B cell (primary cell): ENCODE measurements at regions of chr6 and their contacts with region 1.

Region 1: DNA sequence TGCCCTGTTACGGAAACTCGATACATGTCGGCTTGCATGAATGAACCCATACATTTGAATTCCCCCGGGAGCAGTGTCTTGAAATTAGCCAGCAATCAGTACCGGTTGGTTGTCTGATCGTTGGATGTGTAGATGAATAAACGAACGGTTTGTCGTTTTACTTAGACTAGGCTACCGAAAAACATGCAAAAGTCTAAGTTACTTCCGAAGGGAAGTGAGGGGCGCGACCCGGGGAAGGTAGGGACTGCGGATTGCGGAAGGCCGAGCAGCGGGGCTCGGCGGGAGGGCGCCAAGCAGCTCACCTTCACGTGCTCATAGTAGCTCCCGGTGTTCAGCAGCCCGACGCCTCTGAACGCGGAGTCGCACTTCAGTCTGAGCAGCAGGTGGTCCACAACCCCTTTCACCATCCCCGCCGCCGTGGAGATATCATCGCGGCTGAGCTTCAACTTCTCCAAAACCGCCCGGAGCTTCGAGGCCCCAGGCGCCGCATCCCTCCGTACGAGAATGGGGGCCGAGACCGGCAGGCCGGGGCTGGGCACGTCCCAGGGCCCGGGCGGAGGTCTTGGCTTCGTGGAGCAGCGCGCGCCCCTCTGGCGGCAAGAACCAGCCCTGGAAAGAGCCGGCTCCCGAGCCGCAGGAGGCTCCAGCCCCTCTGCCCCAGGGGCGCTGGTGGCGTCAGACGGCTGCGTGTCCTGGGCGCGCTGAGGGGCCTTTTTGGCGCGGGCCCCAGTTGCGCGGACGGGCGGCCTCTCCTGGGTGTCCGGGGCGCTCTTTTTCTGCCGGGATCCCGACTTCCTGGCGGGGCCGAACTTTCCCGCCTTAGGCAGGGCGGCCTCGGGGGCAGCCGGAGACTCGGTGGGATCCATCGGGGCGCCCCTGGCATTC is 632 bp downstream of the CGAS start:
- DNase-seq: peak; percentile 82
- ATAC-seq: peak; percentile 56
- H3K4me3 ChIP-seq: peak overlapping the region; percentile 86 to 94 (median 91)
- H3K4me3 Mint-ChIP-seq: peak overlapping the region; percentile 95
- H3K27ac ChIP-seq: peak overlapping the region; percentile 87 to 89
- H3K27ac Mint-ChIP-seq: peak overlapping the region; percentile 91
- H3K4me1 ChIP-seq: peaks cover 16 to 25% of the 10 kb centered on the region in 2 donors
- H3K4me1 Mint-ChIP-seq: peaks cover 23% of the 10 kb centered on the region
- H3K27me3 ChIP-seq: no peaks in the 10 kb centered on the region
- H3K27me3 Mint-ChIP-seq: no peaks in the 10 kb centered on the region
- CTCF ChIP-seq: no peak

Region 2: GRCh38 chr6:73134588-73134987 is 316.9 kb before region 1 on chr6:
- CTCF ChIA-PET with region 1: no interaction called
- POLR2A ChIA-PET with region 1: no interaction called
- intact Hi-C with region 1: no loop called
- DNase-seq: peak; percentile 36
- ATAC-seq: peak; percentile 46
- H3K4me3 ChIP-seq: no peak overlapping the region
- H3K4me3 Mint-ChIP-seq: no peak overlapping the region
- H3K27ac ChIP-seq: no peak overlapping the region
- H3K27ac Mint-ChIP-seq: no peak overlapping the region
- H3K4me1 ChIP-seq: peaks cover 2 to 6% of the 10 kb centered on the region in 2 donors
- H3K4me1 Mint-ChIP-seq: peaks cover 7% of the 10 kb centered on the region
- H3K27me3 ChIP-seq: no peaks in the 10 kb centered on the region
- H3K27me3 Mint-ChIP-seq: no peaks in the 10 kb centered on the region
- CTCF ChIP-seq: peak; percentile 28

Region 3: GRCh38 chr6:73367761-73368355 is 83.6 kb before region 1 on chr6:
- CTCF ChIA-PET with region 1: no interaction called
- POLR2A ChIA-PET with region 1: no interaction called
- intact Hi-C with region 1: no loop called
- DNase-seq: no peak
- ATAC-seq: no peak
- H3K4me3 ChIP-seq: no peak overlapping the region
- H3K4me3 Mint-ChIP-seq: no peak overlapping the region
- H3K27ac ChIP-seq: no peak overlapping the region
- H3K27ac Mint-ChIP-seq: no peak overlapping the region
- H3K4me1 ChIP-seq: no peaks in the 10 kb centered on the region
- H3K4me1 Mint-ChIP-seq: no peaks in the 10 kb centered on the region
- H3K27me3 ChIP-seq: no peaks in the 10 kb centered on the region
- H3K27me3 Mint-ChIP-seq: peaks cover 7% of the 10 kb centered on the region
- CTCF ChIP-seq: no peak

Region 4: GRCh38 chr6:73409395-73409794 is 42.1 kb before region 1 on chr6:
- CTCF ChIA-PET with region 1: no interaction called
- POLR2A ChIA-PET with region 1: no interaction called
- intact Hi-C with region 1: no loop called
- DNase-seq: no peak
- ATAC-seq: no peak
- H3K4me3 ChIP-seq: no peak overlapping the region
- H3K4me3 Mint-ChIP-seq: no peak overlapping the region
- H3K27ac ChIP-seq: no peak overlapping the region
- H3K27ac Mint-ChIP-seq: no peak overlapping the region
- H3K4me1 ChIP-seq: no peaks in the 10 kb centered on the region
- H3K4me1 Mint-ChIP-seq: no peaks in the 10 kb centered on the region
- H3K27me3 ChIP-seq: no peaks in the 10 kb centered on the region
- H3K27me3 Mint-ChIP-seq: no peaks in the 10 kb centered on the region
- CTCF ChIP-seq: no peak

Region 5: DNA sequence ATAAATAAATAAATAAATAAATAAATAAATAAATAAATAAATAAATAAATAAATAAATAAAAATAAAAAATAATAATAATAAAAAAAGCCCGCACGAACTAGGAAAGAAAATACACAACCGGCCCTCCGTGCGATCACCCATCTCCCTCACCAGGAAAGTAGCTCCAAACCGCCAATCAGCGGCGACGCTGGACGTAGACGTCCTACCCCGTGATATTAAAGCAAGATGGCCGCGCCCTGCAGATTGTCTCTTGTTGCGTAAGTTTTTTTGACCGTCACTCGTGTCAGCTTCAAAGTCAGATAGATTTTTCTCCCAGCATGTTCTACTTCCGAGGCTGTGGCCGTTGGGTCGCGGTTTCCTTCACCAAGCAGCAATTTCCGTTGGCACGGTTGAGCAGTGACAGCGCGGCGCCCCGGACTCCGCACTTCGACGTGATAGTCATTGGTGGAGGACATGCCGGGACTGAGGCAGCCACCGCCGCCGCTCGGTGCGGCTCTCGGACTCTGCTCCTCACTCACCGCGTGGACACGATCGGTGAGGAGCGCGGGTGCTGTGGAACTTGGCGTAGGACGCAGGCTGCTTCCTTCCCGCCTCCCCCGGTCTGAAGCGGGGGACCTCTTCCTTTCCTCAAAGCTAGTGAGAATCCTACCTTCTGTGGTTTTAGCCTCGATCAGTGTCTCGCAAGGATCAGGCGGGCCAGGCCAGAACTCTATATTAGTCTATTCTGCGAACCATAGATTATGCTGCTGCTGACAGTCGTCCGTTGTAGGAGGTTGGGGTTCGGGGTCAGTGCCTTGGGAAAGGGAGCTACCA is 10.3 kb after region 1 on chr6 and contains the start of gene MTO1:
- CTCF ChIA-PET with region 1: interaction called, 27 read pairs
- POLR2A ChIA-PET with region 1: interaction called, 34 read pairs
- intact Hi-C with region 1: loop called (anchors 1 kb)
- DNase-seq: peak; percentile 91
- ATAC-seq: peak; percentile 94
- H3K4me3 ChIP-seq: peak within 1 kb of the TSS; percentile 66 to 99 (median 78)
- H3K4me3 Mint-ChIP-seq: peak within 1 kb of the TSS; percentile 100
- H3K27ac ChIP-seq: peak within 1 kb of the TSS; percentile 90 to 96
- H3K27ac Mint-ChIP-seq: peak within 1 kb of the TSS; percentile 97
- H3K4me1 ChIP-seq: peaks cover 12 to 31% of the 10 kb centered on the region in 2 donors
- H3K4me1 Mint-ChIP-seq: peaks cover 29% of the 10 kb centered on the region
- H3K27me3 ChIP-seq: no peaks in the 10 kb centered on the region
- H3K27me3 Mint-ChIP-seq: no peaks in the 10 kb centered on the region
- CTCF ChIP-seq: no peak
- total RNA-seq, gene MTO1: 79.5 and 84.4 TPM in 2 replicates